ENCODE measurements at regions of chr6 and their contacts with region 1.

Region 1: DNA sequence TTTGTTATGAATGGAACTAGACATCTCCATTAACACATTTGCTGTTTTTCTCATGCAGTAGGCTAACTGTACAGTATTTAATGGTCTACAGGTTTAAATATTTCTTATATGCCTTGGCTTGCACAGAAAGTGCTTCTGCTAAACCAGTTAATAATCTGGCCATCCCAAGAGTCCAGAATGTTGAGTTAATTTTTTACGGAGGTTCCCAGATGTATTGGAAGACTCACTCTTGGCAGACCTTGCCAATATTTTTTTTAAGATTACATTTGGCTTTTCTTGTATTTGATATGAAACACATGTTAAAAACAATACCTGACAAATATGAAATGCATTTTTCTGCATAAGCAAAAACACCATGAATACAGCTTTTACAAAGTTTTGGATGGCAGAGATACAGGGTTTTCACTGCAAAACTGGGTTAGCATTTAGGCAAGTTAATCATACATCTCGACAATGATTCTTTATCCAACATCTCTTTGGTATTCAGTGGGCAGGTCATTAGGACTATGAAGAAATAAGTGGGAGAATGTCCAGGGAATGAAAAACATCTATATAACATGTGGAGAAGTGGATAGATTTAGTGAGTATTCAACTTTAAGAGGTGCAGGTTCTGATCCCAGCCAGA is 94.0 kb downstream of the SGK1 start:
- DNase-seq: no peak
- ATAC-seq: no peak
- H3K4me3 ChIP-seq: no peak overlapping the region
- H3K4me3 Mint-ChIP-seq: no peak overlapping the region
- H3K27ac ChIP-seq: no peak overlapping the region
- H3K27ac Mint-ChIP-seq: no peak overlapping the region
- H3K4me1 ChIP-seq: no peaks in the 10 kb centered on the region
- H3K4me1 Mint-ChIP-seq: no peaks in the 10 kb centered on the region
- H3K27me3 ChIP-seq: no peaks in the 10 kb centered on the region
- H3K27me3 Mint-ChIP-seq: no peaks in the 10 kb centered on the region
- CTCF ChIP-seq: no peak

Region 2: DNA sequence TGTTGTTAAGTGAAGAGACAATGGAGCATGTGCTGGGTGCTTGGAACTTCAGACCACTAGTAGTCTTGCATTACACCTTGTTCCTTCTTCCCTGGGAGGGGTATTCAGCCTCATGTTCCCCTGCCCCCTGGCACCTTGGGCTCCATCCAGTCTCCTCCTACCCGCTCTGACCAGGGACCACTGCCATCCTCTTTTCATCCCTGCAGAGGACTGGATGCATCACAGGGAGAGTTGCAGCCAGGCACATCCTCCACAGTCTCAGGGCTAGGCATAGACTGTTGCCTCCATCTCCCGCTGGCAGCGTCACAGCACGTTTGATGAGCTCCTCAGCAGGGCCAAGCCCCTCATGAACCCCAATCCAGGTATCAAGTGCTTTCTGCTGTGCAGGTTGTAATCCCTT is 1672.7 kb before region 1 on chr6:
- CTCF ChIA-PET with region 1: no interaction called
- POLR2A ChIA-PET with region 1: no interaction called
- intact Hi-C with region 1: no loop called
- DNase-seq: no peak
- ATAC-seq: no peak
- H3K4me3 ChIP-seq: no peak overlapping the region
- H3K4me3 Mint-ChIP-seq: no peak overlapping the region
- H3K27ac ChIP-seq: no peak overlapping the region
- H3K27ac Mint-ChIP-seq: no peak overlapping the region
- H3K4me1 ChIP-seq: no peaks in the 10 kb centered on the region
- H3K4me1 Mint-ChIP-seq: no peaks in the 10 kb centered on the region
- H3K27me3 ChIP-seq: no peaks in the 10 kb centered on the region
- H3K27me3 Mint-ChIP-seq: peaks cover 30% of the 10 kb centered on the region
- CTCF ChIP-seq: no peak

Region 3: GRCh38 chr6:133682506-133683307 is 541.2 kb before region 1 on chr6:
- CTCF ChIA-PET with region 1: no interaction called
- POLR2A ChIA-PET with region 1: no interaction called
- intact Hi-C with region 1: no loop called
- DNase-seq: no peak
- ATAC-seq: no peak
- H3K4me3 ChIP-seq: no peak overlapping the region
- H3K4me3 Mint-ChIP-seq: no peak overlapping the region
- H3K27ac ChIP-seq: no peak overlapping the region
- H3K27ac Mint-ChIP-seq: no peak overlapping the region
- H3K4me1 ChIP-seq: no peaks in the 10 kb centered on the region
- H3K4me1 Mint-ChIP-seq: no peaks in the 10 kb centered on the region
- H3K27me3 ChIP-seq: no peaks in the 10 kb centered on the region
- H3K27me3 Mint-ChIP-seq: no peaks in the 10 kb centered on the region
- CTCF ChIP-seq: no peak

Region 4: GRCh38 chr6:134258849-134259306 is 35.0 kb after region 1 on chr6:
- CTCF ChIA-PET with region 1: no interaction called
- POLR2A ChIA-PET with region 1: no interaction called
- intact Hi-C with region 1: loop called in 1 of 2 experiments (anchors 5 kb)
- DNase-seq: no peak
- ATAC-seq: no peak
- H3K4me3 ChIP-seq: no peak overlapping the region
- H3K4me3 Mint-ChIP-seq: no peak overlapping the region
- H3K27ac ChIP-seq: no peak overlapping the region
- H3K27ac Mint-ChIP-seq: no peak overlapping the region
- H3K4me1 ChIP-seq: no peaks in the 10 kb centered on the region
- H3K4me1 Mint-ChIP-seq: peaks cover 8% of the 10 kb centered on the region
- H3K27me3 ChIP-seq: no peaks in the 10 kb centered on the region
- H3K27me3 Mint-ChIP-seq: no peaks in the 10 kb centered on the region
- CTCF ChIP-seq: no peak

Region 5: GRCh38 chr6:134272374-134272773 is 48.5 kb after region 1 on chr6:
- CTCF ChIA-PET with region 1: no interaction called
- POLR2A ChIA-PET with region 1: no interaction called
- intact Hi-C with region 1: no loop called
- DNase-seq: peak in 2 of 9 experiments; percentile 23 to 49
- ATAC-seq: no peak
- H3K4me3 ChIP-seq: no peak overlapping the region
- H3K4me3 Mint-ChIP-seq: peak overlapping the region; percentile 58
- H3K27ac ChIP-seq: peak overlapping the region in 1 of 2 experiments; percentile 28
- H3K27ac Mint-ChIP-seq: peak overlapping the region; percentile 90
- H3K4me1 ChIP-seq: peaks cover 30% of the 10 kb centered on the region
- H3K4me1 Mint-ChIP-seq: peaks cover 41% of the 10 kb centered on the region
- H3K27me3 ChIP-seq: no peaks in the 10 kb centered on the region
- H3K27me3 Mint-ChIP-seq: no peaks in the 10 kb centered on the region
- CTCF ChIP-seq: no peak

Measured in CD8-positive, alpha-beta T cell (primary cell).